ENCODE measurements at regions of chr14 and their contacts with region 1.

Region 1: DNA sequence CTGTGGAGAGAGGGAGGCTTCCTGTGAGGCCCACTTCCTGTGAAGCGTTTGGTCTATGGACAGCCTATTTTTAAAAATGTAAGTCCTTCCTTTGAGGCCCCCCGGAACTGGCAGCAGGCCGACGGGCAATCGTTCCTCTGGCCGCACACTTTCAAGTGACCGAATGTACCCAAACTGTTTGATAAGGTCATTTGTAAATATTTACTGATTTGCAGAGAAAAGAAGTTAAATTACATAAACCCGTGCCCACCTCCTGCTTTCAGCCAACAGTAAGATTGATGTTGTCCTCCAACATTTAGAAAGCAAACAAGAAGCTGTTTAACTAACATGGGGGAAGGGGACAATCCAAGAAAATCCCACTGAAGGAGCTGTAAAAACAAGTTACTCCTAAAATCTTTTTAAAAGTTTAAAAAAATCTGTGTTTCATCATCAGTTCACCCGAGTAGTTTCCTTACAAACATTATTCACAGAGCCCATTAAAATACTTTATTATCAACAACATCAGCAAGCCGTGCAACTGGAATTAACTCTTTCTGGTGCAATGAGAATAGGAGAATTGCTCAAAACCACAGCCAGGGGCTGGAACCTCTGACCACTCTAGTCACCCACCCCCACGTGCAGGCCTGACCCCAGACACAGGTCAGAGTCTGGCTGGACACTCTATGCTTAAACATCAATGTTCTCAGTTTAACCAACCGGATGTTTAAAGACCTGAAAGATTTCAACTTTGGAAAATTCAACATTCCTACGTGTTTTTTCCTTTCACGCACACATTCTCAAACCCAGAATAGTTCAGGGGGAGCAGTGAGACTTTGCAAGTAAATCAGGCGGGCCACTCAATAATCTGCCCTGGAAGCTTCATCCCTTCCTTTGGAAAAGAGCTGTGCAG is 65.3 kb downstream of the FOXN3 start:
- DNase-seq: peak in 6 of 9 experiments; percentile 5 to 58 (median 24)
- ATAC-seq: peak; percentile 62
- H3K4me3 ChIP-seq: peak overlapping the region; percentile 15 to 16
- H3K4me3 Mint-ChIP-seq: peak overlapping the region; percentile 78
- H3K27ac ChIP-seq: peak overlapping the region in 1 of 2 experiments; percentile 66
- H3K27ac Mint-ChIP-seq: peak overlapping the region; percentile 94
- H3K4me1 ChIP-seq: peaks cover 49% of the 10 kb centered on the region
- H3K4me1 Mint-ChIP-seq: peaks cover 72% of the 10 kb centered on the region
- H3K27me3 ChIP-seq: no peaks in the 10 kb centered on the region
- H3K27me3 Mint-ChIP-seq: no peaks in the 10 kb centered on the region
- CTCF ChIP-seq: no peak

Region 2: DNA sequence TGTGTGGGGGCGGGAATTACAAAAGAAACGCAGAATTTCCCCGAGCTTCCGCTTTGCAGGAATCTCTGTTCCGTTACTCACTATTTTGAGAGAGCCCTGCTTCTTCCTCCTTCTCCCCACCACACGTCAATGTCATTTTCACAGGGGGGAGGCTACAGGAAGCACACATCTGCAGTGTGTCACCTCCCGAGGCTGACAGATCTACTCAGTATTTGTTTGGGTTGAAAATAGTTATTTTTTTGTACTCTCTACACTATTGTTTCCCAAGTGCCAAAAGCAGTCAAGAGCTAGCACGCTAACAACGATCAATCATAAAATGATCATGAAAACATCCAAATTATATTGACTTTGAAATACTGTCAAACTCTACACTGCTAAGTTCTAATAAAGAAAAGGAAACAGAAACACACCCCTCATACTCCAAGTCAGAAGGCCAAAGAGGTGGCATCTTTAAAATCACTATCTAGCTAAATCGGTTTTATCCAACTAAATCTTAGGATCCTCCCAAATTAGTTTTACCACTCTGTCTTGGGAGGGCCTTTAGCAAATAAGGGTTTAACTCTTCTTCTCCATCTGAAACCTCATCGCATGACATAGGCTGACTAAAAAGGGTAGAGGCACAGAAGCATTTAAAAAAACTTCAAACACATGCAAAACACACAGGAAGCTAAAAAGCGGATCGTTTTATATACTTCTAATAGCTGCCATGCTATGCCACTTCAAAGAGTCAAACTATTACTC is 13.5 kb after region 1 on chr14:
- CTCF ChIA-PET with region 1: no interaction called
- POLR2A ChIA-PET with region 1: no interaction called
- intact Hi-C with region 1: loop called in 1 of 2 experiments (anchors 2 kb)
- DNase-seq: peak in 8 of 9 experiments; percentile 33 to 88 (median 62)
- ATAC-seq: peak; percentile 92
- H3K4me3 ChIP-seq: peak overlapping the region; percentile 34 to 36
- H3K4me3 Mint-ChIP-seq: peak overlapping the region; percentile 64
- H3K27ac ChIP-seq: peak overlapping the region; percentile 60 to 73
- H3K27ac Mint-ChIP-seq: peak overlapping the region; percentile 85
- H3K4me1 ChIP-seq: peaks cover 35% of the 10 kb centered on the region
- H3K4me1 Mint-ChIP-seq: peaks cover 56% of the 10 kb centered on the region
- H3K27me3 ChIP-seq: no peaks in the 10 kb centered on the region
- H3K27me3 Mint-ChIP-seq: no peaks in the 10 kb centered on the region
- CTCF ChIP-seq: no peak

Measured in CD8-positive, alpha-beta T cell (primary cell).